Activated CD8-positive, alpha-beta T cell treated with anti-CD3 and anti-CD28 coated beads, Interleukin-2, amount 10 ng/mL, durations not matched to agents 7 days and 5 days (primary cell): ENCODE measurements at regions of chr14 and their contacts with region 1.

Region 1: GRCh38 chr14:49892636-49893308 is at the start of gene ARF6:
- DNase-seq: peak; percentile 98
- ATAC-seq: peak; percentile 89
- H3K4me3 Mint-ChIP-seq: peak within 1 kb of the TSS; percentile 90
- H3K27ac Mint-ChIP-seq: peak within 1 kb of the TSS; percentile 97
- H3K4me1 Mint-ChIP-seq: peaks cover 17% of the 10 kb centered on the region
- H3K27me3 Mint-ChIP-seq: no peaks in the 10 kb centered on the region
- total RNA-seq, gene ARF6: 183 to 193 TPM

Region 2: DNA sequence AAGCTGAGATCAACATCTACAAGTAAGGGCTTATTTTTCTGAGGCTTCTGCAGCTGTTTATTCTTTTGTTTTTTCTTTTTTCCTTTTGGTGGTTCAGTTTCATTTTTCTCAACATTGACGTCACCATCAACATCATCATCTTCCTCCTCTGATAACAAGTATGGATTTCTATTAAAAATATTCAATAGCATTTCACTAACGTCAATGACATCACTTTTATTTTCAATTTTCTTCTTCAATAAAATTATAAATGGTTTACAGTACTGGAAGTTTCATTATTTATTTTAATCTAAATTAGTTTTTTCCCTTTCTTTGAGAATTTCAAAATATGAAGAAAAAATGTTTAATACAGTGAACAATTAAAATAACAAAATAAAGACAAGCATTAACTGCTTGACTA is 64.1 kb before region 1 on chr14:
- CTCF ChIA-PET with region 1: no interaction called
- POLR2A ChIA-PET with region 1: no interaction called
- DNase-seq: no peak
- ATAC-seq: no peak
- H3K4me3 Mint-ChIP-seq: no peak overlapping the region
- H3K27ac Mint-ChIP-seq: no peak overlapping the region
- H3K4me1 Mint-ChIP-seq: peaks cover 4% of the 10 kb centered on the region
- H3K27me3 Mint-ChIP-seq: no peaks in the 10 kb centered on the region

Region 3: GRCh38 chr14:49879683-49880204 is 13.0 kb before region 1 on chr14:
- CTCF ChIA-PET with region 1: interaction called, 16 read pairs
- POLR2A ChIA-PET with region 1: interaction called, 9 read pairs
- DNase-seq: peak; percentile 73
- ATAC-seq: peak; percentile 91
- H3K4me3 Mint-ChIP-seq: no peak overlapping the region
- H3K27ac Mint-ChIP-seq: peak overlapping the region; percentile 43
- H3K4me1 Mint-ChIP-seq: peaks cover 29% of the 10 kb centered on the region
- H3K27me3 Mint-ChIP-seq: peaks cover 2% of the 10 kb centered on the region

Region 4: DNA sequence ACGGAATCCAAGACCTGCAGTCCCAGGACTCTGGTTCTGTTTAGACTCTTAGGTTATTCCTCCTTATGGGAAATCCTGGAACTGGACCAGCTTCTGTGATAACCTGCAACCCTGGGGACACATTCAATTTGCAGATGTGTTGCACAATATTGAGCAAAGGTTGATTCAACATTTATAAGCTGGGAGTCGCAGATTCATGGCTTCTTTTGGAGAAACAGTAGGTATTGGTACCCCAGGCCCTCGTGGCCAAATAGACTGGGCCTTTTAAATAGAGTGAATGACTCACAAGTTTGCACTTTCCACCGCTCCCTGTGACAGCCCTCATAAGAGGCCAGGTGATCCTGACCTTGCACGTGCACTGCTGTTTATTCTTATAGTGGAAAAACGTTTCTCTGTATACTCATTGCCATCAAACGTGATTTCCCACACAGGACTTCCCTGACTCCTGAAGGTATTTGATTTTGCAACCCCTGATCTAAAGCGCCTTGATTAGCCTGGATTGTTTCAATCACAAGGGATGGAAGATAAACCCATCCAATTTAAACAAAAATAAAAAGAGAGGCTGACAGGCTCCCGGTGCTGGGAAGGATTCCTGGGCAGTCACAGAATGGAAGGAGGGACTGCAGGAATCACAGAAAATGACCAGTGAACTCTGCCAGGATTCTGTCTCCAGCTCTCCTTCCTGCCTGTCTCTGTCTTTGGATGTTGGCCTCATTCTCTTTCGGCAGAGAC is 125.6 kb after region 1 on chr14:
- CTCF ChIA-PET with region 1: no interaction called
- POLR2A ChIA-PET with region 1: no interaction called
- DNase-seq: no peak
- ATAC-seq: no peak
- H3K4me3 Mint-ChIP-seq: no peak overlapping the region
- H3K27ac Mint-ChIP-seq: no peak overlapping the region
- H3K4me1 Mint-ChIP-seq: peaks cover 45% of the 10 kb centered on the region
- H3K27me3 Mint-ChIP-seq: no peaks in the 10 kb centered on the region